ENCODE measurements at regions of chr17 and their contacts with region 1.

Region 1: GRCh38 chr17:70307430-70308225 is 138.3 kb downstream of the KCNJ2 start:
- DNase-seq: no peak
- H3K4me3 ChIP-seq: no peak overlapping the region
- H3K27ac ChIP-seq: no peak overlapping the region
- H3K4me1 ChIP-seq: no peaks in the 10 kb centered on the region
- H3K27me3 ChIP-seq: no peaks in the 10 kb centered on the region
- CTCF ChIP-seq: no peak
- POLR2A ChIP-seq: no peak

Region 2: GRCh38 chr17:70636517-70637133 is 329.0 kb after region 1 on chr17:
- CTCF ChIA-PET with region 1: no interaction called
- POLR2A ChIA-PET with region 1: no interaction called
- dilution Hi-C with region 1: no loop called
- intact Hi-C with region 1: loop called (anchors 5 kb)
- DNase-seq: peak; percentile 61
- H3K4me3 ChIP-seq: no peak overlapping the region
- H3K27ac ChIP-seq: no peak overlapping the region
- H3K4me1 ChIP-seq: no peaks in the 10 kb centered on the region
- H3K27me3 ChIP-seq: peaks cover 2 to 8% of the 10 kb centered on the region in 2 experiments
- CTCF ChIP-seq: peak; percentile 31 to 45
- POLR2A ChIP-seq: no peak

Measured in endothelial cell of umbilical vein (primary cell).